MCF 10A (cell line): ENCODE measurements at regions of chr7 and their contacts with region 1.

Region 1: GRCh38 chr7:32495298-32496176 is at the start of gene AVL9:
- DNase-seq: peak; percentile 96
- H3K4me3 Mint-ChIP-seq: peak within 1 kb of the TSS; percentile 82
- H3K27ac Mint-ChIP-seq: peak within 1 kb of the TSS; percentile 83
- H3K4me1 Mint-ChIP-seq: peaks cover 10% of the 10 kb centered on the region
- H3K27me3 Mint-ChIP-seq: no peaks in the 10 kb centered on the region
- CTCF ChIP-seq: no peak
- total RNA-seq, gene AVL9: 38.6 and 39.2 TPM in 2 replicates

Region 2: GRCh38 chr7:32506266-32507054 is 10.9 kb after region 1 on chr7:
- CTCF ChIA-PET with region 1: interaction called, 3 read pairs
- POLR2A ChIA-PET with region 1: interaction called, 29 read pairs
- intact Hi-C with region 1: no loop called
- DNase-seq: peak; percentile 89
- H3K4me3 Mint-ChIP-seq: peak overlapping the region; percentile 72
- H3K27ac Mint-ChIP-seq: peak overlapping the region; percentile 97
- H3K4me1 Mint-ChIP-seq: peaks cover 33% of the 10 kb centered on the region
- H3K27me3 Mint-ChIP-seq: no peaks in the 10 kb centered on the region
- CTCF ChIP-seq: no peak

Region 3: GRCh38 chr7:32536585-32536984 is 41.0 kb after region 1 on chr7:
- CTCF ChIA-PET with region 1: no interaction called
- POLR2A ChIA-PET with region 1: interaction called, 10 read pairs
- intact Hi-C with region 1: loop called (anchors 2 kb)
- DNase-seq: peak; percentile 77
- H3K4me3 Mint-ChIP-seq: no peak overlapping the region
- H3K27ac Mint-ChIP-seq: no peak overlapping the region
- H3K4me1 Mint-ChIP-seq: peaks cover 14% of the 10 kb centered on the region
- H3K27me3 Mint-ChIP-seq: no peaks in the 10 kb centered on the region
- CTCF ChIP-seq: no peak